T-cell (primary cell): ENCODE measurements at regions of chr1 and their contacts with region 1.

Region 1: DNA sequence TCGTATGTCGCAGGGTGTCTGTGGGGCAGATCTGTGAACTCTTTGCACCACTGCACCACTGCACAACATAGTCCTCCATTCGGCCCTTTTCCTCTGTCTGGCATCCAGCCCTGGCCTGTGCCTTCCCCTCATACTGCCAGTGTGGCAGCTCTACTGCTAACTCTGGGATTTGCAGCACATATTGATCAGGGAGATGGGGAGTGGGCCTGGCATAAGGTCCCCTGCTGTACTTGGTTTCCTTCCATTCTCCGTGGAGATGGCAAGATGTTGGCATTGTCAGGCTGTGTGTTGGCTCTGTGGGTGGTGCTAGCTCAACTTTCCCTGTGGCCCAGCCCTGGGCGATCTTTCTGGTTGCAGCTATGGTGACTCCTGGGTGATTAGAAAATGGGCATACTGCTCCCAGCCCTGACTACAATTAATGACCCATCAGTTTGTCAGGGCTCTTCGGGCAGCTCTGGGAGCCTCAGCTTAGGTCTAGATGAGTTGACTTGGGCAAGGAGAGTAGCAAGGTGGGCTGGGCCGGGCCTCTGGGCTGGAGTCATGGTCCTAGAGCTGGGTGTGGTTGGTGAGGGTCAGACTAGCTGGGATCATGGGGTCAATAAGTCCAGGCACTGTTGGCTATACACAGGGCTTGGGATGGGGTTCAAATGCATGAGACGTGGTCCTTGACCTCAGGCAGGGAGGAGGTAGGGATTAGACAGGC is 11.4 kb downstream of the PTPRU start:
- DNase-seq: no peak
- ATAC-seq: no peak
- H3K4me3 ChIP-seq: no peak overlapping the region
- H3K4me3 Mint-ChIP-seq: no peak overlapping the region
- H3K27ac ChIP-seq: no peak overlapping the region
- H3K27ac Mint-ChIP-seq: no peak overlapping the region
- H3K4me1 ChIP-seq: no peaks in the 10 kb centered on the region
- H3K4me1 Mint-ChIP-seq: no peaks in the 10 kb centered on the region
- H3K27me3 ChIP-seq: peaks cover 0 to 58% of the 10 kb centered on the region in 2 experiments
- H3K27me3 Mint-ChIP-seq: peaks cover 21 to 29% of the 10 kb centered on the region in 2 donors

Region 2: GRCh38 chr1:29222686-29223085 is 25.0 kb before region 1 on chr1:
- CTCF ChIA-PET with region 1: no interaction called
- POLR2A ChIA-PET with region 1: interaction called in 1 of 2 experiments, 10 read pairs
- DNase-seq: no peak
- ATAC-seq: no peak
- H3K4me3 ChIP-seq: no peak overlapping the region
- H3K4me3 Mint-ChIP-seq: no peak overlapping the region
- H3K27ac ChIP-seq: no peak overlapping the region
- H3K27ac Mint-ChIP-seq: no peak overlapping the region
- H3K4me1 ChIP-seq: no peaks in the 10 kb centered on the region
- H3K4me1 Mint-ChIP-seq: no peaks in the 10 kb centered on the region
- H3K27me3 ChIP-seq: no peaks in the 10 kb centered on the region
- H3K27me3 Mint-ChIP-seq: no peaks in the 10 kb centered on the region

Region 3: GRCh38 chr1:29271724-29272123 is 24.0 kb after region 1 on chr1:
- CTCF ChIA-PET with region 1: no interaction called
- POLR2A ChIA-PET with region 1: no interaction called
- DNase-seq: no peak
- ATAC-seq: no peak
- H3K4me3 ChIP-seq: no peak overlapping the region
- H3K4me3 Mint-ChIP-seq: no peak overlapping the region
- H3K27ac ChIP-seq: no peak overlapping the region
- H3K27ac Mint-ChIP-seq: no peak overlapping the region
- H3K4me1 ChIP-seq: no peaks in the 10 kb centered on the region
- H3K4me1 Mint-ChIP-seq: no peaks in the 10 kb centered on the region
- H3K27me3 ChIP-seq: peaks cover 2 to 37% of the 10 kb centered on the region in 2 experiments
- H3K27me3 Mint-ChIP-seq: peaks cover 52 to 61% of the 10 kb centered on the region in 2 donors